Ascending aorta (tissue), 2 donors: ENCODE measurements at regions of chr3 and their contacts with region 1.

Region 1: GRCh38 chr3:181709537-181710279 is 2.0 kb upstream of the SOX2 start:
- DNase-seq: no peak
- H3K4me3 ChIP-seq: no peak overlapping the region
- H3K27ac ChIP-seq: no peak overlapping the region
- H3K4me1 ChIP-seq: peaks cover 0 to 22% of the 10 kb centered on the region in 2 donors
- H3K27me3 ChIP-seq: peaks cover 37% of the 10 kb centered on the region
- CTCF ChIP-seq: peak; percentile 21 to 76 (median 53)

Region 2: GRCh38 chr3:182683453-182683852 is 973.7 kb after region 1 on chr3:
- intact Hi-C with region 1: loop called (anchors 5 kb)
- DNase-seq: peak in 1 of 2 donors; percentile 67
- H3K4me3 ChIP-seq: peak overlapping the region; percentile 61 to 62
- H3K27ac ChIP-seq: no peak overlapping the region
- H3K4me1 ChIP-seq: peaks cover 0 to 4% of the 10 kb centered on the region in 2 donors
- H3K27me3 ChIP-seq: no peaks in the 10 kb centered on the region
- CTCF ChIP-seq: peak; percentile 61 to 85 (median 85)